CD4-positive, alpha-beta memory T cell (primary cell): ENCODE measurements at regions of chr1 and their contacts with region 1.

Region 1: GRCh38 chr1:168439456-168440375 is 104.1 kb downstream of the XCL2 start:
- DNase-seq: peak; percentile 80 to 84 (median 82)
- H3K4me3 ChIP-seq: peak overlapping the region in 1 of 2 donors; percentile 46
- H3K4me3 Mint-ChIP-seq: peak overlapping the region; percentile 66 to 92 (median 82)
- H3K27ac ChIP-seq: no peak overlapping the region
- H3K27ac Mint-ChIP-seq: peak overlapping the region; percentile 70 to 93 (median 88)
- H3K4me1 ChIP-seq: peaks cover 51% of the 10 kb centered on the region
- H3K4me1 Mint-ChIP-seq: peaks cover 34 to 69% (median 46%) of the 10 kb centered on the region in 4 donors
- H3K27me3 ChIP-seq: no peaks in the 10 kb centered on the region
- H3K27me3 Mint-ChIP-seq: no peaks in the 10 kb centered on the region

Region 2: DNA sequence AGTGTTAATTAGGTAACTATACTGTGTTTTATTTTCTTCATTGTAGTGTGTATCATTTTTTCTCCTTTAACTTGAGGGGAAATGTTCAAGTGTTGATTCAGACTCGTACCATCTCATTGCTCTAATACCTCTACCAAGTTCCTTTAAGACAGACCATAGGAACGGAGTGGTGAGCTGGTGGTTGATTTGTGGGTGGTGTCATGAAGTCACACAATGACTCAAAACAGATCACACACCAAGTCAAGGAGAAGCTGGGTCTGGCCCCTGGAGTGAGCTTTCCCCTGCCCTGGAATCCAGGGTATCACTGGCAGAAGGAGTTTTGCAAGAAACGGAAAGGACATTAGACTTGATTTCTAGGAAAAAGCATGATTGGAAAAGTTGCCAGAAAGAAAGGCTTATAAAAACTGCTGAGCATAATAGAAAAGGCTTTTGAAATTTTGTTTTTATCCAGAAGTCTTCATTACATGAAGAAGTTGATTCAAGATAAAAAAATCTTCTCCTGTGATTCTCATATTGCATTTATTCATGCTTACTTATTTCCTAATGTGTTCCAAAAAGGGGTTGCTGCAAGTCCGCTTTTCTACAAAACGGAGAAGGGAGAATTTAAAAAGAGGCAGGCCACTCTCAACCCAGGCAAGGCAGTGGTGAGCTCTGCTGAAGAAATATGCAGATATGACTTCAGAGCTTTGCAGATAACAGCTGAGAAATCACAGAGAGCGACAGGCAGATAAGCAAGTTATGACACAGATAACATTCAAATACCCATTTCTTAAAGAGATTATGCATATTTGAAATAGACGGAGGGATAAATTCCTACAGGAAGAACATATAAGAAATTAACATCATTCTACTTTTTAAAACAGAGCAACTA is 79.3 kb before region 1 on chr1:
- CTCF ChIA-PET with region 1: interaction called, 15 read pairs
- POLR2A ChIA-PET with region 1: interaction called, 15 read pairs
- intact Hi-C with region 1: loop called (anchors 5 kb)
- DNase-seq: peak in 1 of 5 donors; percentile 55
- H3K4me3 ChIP-seq: no peak overlapping the region
- H3K4me3 Mint-ChIP-seq: peak overlapping the region in 3 of 8 donors; percentile 25 to 48 (median 36)
- H3K27ac ChIP-seq: no peak overlapping the region
- H3K27ac Mint-ChIP-seq: peak overlapping the region in 5 of 7 donors; percentile 79 to 100 (median 90)
- H3K4me1 ChIP-seq: peaks cover 49% of the 10 kb centered on the region
- H3K4me1 Mint-ChIP-seq: peaks cover 27 to 55% (median 44%) of the 10 kb centered on the region in 4 donors
- H3K27me3 ChIP-seq: no peaks in the 10 kb centered on the region
- H3K27me3 Mint-ChIP-seq: no peaks in the 10 kb centered on the region

Region 3: DNA sequence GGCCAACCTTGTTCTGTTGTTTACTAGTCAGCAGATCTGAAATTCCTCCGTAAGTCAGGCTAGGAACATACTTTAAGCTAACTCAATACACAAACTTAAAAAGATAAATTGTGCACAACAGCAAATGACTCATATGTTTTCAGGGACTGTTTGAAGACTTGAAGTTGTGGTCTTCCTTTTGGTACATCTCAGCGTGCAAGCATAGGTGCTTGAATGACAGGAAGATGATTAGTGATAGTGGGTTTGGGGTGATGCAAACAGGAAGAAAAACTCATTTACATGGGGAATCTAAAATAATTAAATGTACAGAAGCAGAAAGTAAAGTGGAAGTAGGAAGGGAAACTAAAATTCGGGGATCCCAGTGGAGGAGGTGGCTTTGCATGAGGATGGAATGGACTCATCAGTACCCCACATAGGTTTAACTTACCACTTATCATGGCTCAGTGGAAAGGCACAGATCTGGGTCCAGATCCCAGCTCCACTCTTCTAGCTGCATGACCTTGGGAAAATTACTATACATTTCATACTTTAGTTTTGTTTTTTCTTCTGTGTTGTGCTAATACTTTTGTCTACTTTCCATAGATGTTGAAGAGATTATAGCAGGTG is 18.2 kb before region 1 on chr1:
- CTCF ChIA-PET with region 1: interaction called, 102 read pairs
- POLR2A ChIA-PET with region 1: interaction called, 20 read pairs
- intact Hi-C with region 1: no loop called
- DNase-seq: peak; percentile 45 to 66 (median 52)
- H3K4me3 ChIP-seq: no peak overlapping the region
- H3K4me3 Mint-ChIP-seq: peak overlapping the region; percentile 32 to 81 (median 60)
- H3K27ac ChIP-seq: peak overlapping the region; percentile 50
- H3K27ac Mint-ChIP-seq: peak overlapping the region; percentile 54 to 86 (median 80)
- H3K4me1 ChIP-seq: peaks cover 35% of the 10 kb centered on the region
- H3K4me1 Mint-ChIP-seq: peaks cover 22 to 46% (median 36%) of the 10 kb centered on the region in 4 donors
- H3K27me3 ChIP-seq: no peaks in the 10 kb centered on the region
- H3K27me3 Mint-ChIP-seq: no peaks in the 10 kb centered on the region

Region 4: DNA sequence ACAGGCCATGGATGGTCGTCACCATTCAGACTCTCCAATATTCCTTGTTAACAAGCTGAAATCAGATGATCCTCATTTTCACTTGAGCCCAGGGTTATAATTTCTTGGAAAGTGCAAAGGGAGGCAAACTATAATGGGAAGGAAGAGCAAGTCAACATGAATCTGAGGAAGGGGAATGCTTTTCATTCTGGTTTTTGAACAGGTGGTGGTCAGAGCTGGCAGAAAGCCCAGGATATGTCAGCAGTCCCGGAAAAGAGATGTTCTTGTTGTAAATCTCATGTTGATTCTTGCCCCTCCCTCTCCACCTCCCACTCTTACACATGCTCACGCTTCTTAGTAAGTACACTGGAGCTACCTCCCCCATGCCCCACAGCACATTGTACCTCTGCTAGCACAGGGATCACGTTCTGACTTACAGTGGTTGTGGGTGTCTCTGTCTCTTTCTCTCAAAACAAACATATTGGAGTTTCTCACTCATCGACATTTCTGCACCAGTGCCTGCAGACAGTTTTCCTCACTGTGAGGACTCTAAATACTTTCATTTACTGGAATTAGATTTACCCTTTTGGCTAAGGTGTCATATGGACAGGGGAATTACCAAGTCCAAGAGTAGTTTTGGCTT is 26.5 kb after region 1 on chr1:
- CTCF ChIA-PET with region 1: interaction called, 12 read pairs
- POLR2A ChIA-PET with region 1: interaction called, 12 read pairs
- intact Hi-C with region 1: no loop called
- DNase-seq: peak in 2 of 5 donors; percentile 16 to 41
- H3K4me3 ChIP-seq: peak overlapping the region in 1 of 2 donors; percentile 9
- H3K4me3 Mint-ChIP-seq: peak overlapping the region in 6 of 8 donors; percentile 47 to 88 (median 66)
- H3K27ac ChIP-seq: no peak overlapping the region
- H3K27ac Mint-ChIP-seq: peak overlapping the region; percentile 83 to 88 (median 85)
- H3K4me1 ChIP-seq: peaks cover 57% of the 10 kb centered on the region
- H3K4me1 Mint-ChIP-seq: peaks cover 54 to 67% (median 60%) of the 10 kb centered on the region in 4 donors
- H3K27me3 ChIP-seq: no peaks in the 10 kb centered on the region
- H3K27me3 Mint-ChIP-seq: no peaks in the 10 kb centered on the region

Region 5: DNA sequence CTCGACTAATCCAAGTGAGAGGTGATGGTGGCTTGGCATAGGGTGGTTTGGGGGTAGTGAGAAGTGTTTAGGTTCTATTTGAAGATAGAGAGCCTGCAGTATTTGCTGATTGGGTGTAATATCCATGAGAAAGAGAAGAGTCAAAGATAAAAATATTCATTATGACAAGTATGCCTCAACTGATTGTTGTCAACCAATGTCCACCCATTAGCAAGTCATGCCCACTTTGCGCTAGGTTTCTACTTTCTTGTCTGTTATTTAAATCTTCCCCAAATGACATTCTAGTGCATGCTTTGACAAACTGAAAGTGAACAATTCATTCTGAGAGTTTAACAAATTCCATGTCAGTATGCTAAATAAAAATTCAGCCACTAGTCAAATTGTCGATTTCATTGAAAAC is 132.9 kb after region 1 on chr1:
- CTCF ChIA-PET with region 1: interaction called, 12 read pairs
- POLR2A ChIA-PET with region 1: interaction called, 6 read pairs
- intact Hi-C with region 1: loop called (anchors 1 kb)
- DNase-seq: no peak
- H3K4me3 ChIP-seq: no peak overlapping the region
- H3K4me3 Mint-ChIP-seq: no peak overlapping the region
- H3K27ac ChIP-seq: no peak overlapping the region
- H3K27ac Mint-ChIP-seq: no peak overlapping the region
- H3K4me1 ChIP-seq: no peaks in the 10 kb centered on the region
- H3K4me1 Mint-ChIP-seq: peaks cover 8 to 17% (median 14%) of the 10 kb centered on the region in 4 donors
- H3K27me3 ChIP-seq: no peaks in the 10 kb centered on the region
- H3K27me3 Mint-ChIP-seq: peaks cover 0 to 2% of the 10 kb centered on the region in 2 donors

Region 6: GRCh38 chr1:168603501-168604110 is 163.9 kb after region 1 on chr1:
- CTCF ChIA-PET with region 1: interaction called, 36 read pairs
- POLR2A ChIA-PET with region 1: interaction called, 8 read pairs
- intact Hi-C with region 1: no loop called
- DNase-seq: peak; percentile 53 to 61 (median 57)
- H3K4me3 ChIP-seq: no peak overlapping the region
- H3K4me3 Mint-ChIP-seq: no peak overlapping the region
- H3K27ac ChIP-seq: no peak overlapping the region
- H3K27ac Mint-ChIP-seq: peak overlapping the region in 1 of 7 donors; percentile 58
- H3K4me1 ChIP-seq: no peaks in the 10 kb centered on the region
- H3K4me1 Mint-ChIP-seq: no peaks in the 10 kb centered on the region
- H3K27me3 ChIP-seq: no peaks in the 10 kb centered on the region
- H3K27me3 Mint-ChIP-seq: no peaks in the 10 kb centered on the region

Region 7: DNA sequence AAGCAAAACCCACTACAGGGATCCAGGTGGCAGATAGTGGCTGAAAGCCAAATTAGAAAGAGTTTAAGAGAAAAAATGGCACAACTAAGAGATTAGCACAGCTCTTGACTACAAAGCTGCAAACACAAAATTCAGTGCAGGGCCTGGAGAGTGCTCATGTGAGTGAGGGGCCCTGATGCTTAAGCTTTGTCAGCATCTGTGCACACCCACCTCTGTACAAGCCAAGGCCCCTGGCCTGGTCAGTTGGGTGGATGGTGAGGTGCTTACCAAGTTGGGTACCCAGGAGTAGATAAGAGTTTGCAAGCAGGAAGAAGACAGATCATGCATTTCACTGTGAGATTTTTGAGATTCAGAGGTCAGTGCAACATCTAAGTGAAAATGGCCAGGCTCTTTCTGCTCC is 604.1 kb after region 1 on chr1:
- CTCF ChIA-PET with region 1: no interaction called
- POLR2A ChIA-PET with region 1: no interaction called
- intact Hi-C with region 1: no loop called
- DNase-seq: peak in 2 of 5 donors; percentile 0 to 4
- H3K4me3 ChIP-seq: no peak overlapping the region
- H3K4me3 Mint-ChIP-seq: peak overlapping the region in 6 of 8 donors; percentile 32 to 82 (median 74)
- H3K27ac ChIP-seq: no peak overlapping the region
- H3K27ac Mint-ChIP-seq: peak overlapping the region; percentile 26 to 89 (median 65)
- H3K4me1 ChIP-seq: peaks cover 24% of the 10 kb centered on the region
- H3K4me1 Mint-ChIP-seq: peaks cover 28 to 38% (median 32%) of the 10 kb centered on the region in 4 donors
- H3K27me3 ChIP-seq: no peaks in the 10 kb centered on the region
- H3K27me3 Mint-ChIP-seq: no peaks in the 10 kb centered on the region

Region 8: DNA sequence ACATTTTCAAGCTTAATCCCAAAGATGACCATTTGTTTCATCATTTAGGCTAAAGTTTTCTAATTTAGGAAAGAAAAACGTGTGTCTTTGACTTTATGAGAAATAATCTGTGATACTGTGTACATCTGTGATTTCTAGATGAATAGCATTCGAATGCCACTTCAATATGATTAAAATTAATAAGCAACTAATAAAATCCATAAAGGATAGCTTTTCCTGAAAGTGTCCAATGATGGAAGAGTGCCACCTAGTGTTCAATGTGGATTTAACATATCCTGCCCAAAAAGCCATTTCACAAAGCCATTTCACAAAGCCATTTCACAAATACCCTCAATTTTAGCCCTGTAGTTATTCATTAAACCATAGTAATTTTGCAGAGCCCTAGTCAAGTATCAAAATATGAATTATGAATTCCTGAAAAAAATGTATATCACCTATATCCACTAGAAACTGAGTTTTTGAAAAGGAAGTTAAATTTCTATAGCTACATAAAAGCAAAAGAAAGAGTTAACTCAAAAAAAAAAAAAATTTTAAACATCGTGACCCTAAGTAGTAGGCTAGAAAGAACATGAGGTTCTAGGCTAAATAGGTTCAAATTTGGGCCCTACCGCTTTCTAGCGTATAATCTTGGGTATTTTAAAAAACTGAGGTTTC is 908.8 kb after region 1 on chr1:
- CTCF ChIA-PET with region 1: interaction called, 50 read pairs
- POLR2A ChIA-PET with region 1: interaction called, 8 read pairs
- intact Hi-C with region 1: loop called (anchors 1 kb)
- DNase-seq: peak in 4 of 5 donors; percentile 44 to 52 (median 47)
- H3K4me3 ChIP-seq: no peak overlapping the region
- H3K4me3 Mint-ChIP-seq: no peak overlapping the region
- H3K27ac ChIP-seq: no peak overlapping the region
- H3K27ac Mint-ChIP-seq: no peak overlapping the region
- H3K4me1 ChIP-seq: no peaks in the 10 kb centered on the region
- H3K4me1 Mint-ChIP-seq: peaks cover 0 to 3% (median under 1%) of the 10 kb centered on the region in 4 donors
- H3K27me3 ChIP-seq: no peaks in the 10 kb centered on the region
- H3K27me3 Mint-ChIP-seq: peaks cover 0 to 1% of the 10 kb centered on the region in 2 donors